ENCODE measurements at regions of chr9 and their contacts with region 1.

Region 1: GRCh38 chr9:137095664-137096517 is 9.1 kb downstream of the MAN1B1 start:
- DNase-seq: peak; percentile 73 to 95 (median 87)
- ATAC-seq: peak; percentile 97
- H3K4me3 ChIP-seq: peak overlapping the region; percentile 27 to 57
- H3K4me3 Mint-ChIP-seq: peak overlapping the region; percentile 80
- H3K27ac ChIP-seq: peak overlapping the region; percentile 73 to 84
- H3K27ac Mint-ChIP-seq: peak overlapping the region; percentile 96
- H3K4me1 ChIP-seq: peaks cover 22% of the 10 kb centered on the region
- H3K4me1 Mint-ChIP-seq: peaks cover 24% of the 10 kb centered on the region
- H3K27me3 ChIP-seq: no peaks in the 10 kb centered on the region
- H3K27me3 Mint-ChIP-seq: no peaks in the 10 kb centered on the region
- CTCF ChIP-seq: peak; percentile 68

Region 2: GRCh38 chr9:136700959-136701667 is 394.8 kb before region 1 on chr9:
- CTCF ChIA-PET with region 1: no interaction called
- POLR2A ChIA-PET with region 1: no interaction called
- intact Hi-C with region 1: no loop called
- DNase-seq: peak; percentile 32 to 87 (median 56)
- ATAC-seq: peak; percentile 87
- H3K4me3 ChIP-seq: peak overlapping the region; percentile 37 to 51
- H3K4me3 Mint-ChIP-seq: peak overlapping the region; percentile 79
- H3K27ac ChIP-seq: peak overlapping the region in 1 of 2 experiments; percentile 63
- H3K27ac Mint-ChIP-seq: peak overlapping the region; percentile 97
- H3K4me1 ChIP-seq: peaks cover 16% of the 10 kb centered on the region
- H3K4me1 Mint-ChIP-seq: peaks cover 20% of the 10 kb centered on the region
- H3K27me3 ChIP-seq: peaks cover 0 to 5% of the 10 kb centered on the region in 2 experiments
- H3K27me3 Mint-ChIP-seq: peaks cover 3% of the 10 kb centered on the region
- CTCF ChIP-seq: no peak

Region 3: GRCh38 chr9:137070201-137070905 is 25.5 kb before region 1 on chr9 and contains the start of gene SAPCD2:
- CTCF ChIA-PET with region 1: interaction called, 11 read pairs
- POLR2A ChIA-PET with region 1: interaction called, 3 read pairs
- intact Hi-C with region 1: loop called (anchors 1 to 2 kb)
- DNase-seq: peak; percentile 66 to 94 (median 82)
- ATAC-seq: peak; percentile 87
- H3K4me3 ChIP-seq: peak within 1 kb of the TSS; percentile 46 to 50
- H3K4me3 Mint-ChIP-seq: peak within 1 kb of the TSS; percentile 70
- H3K27ac ChIP-seq: peak within 1 kb of the TSS in 1 of 2 experiments; percentile 30
- H3K27ac Mint-ChIP-seq: no peak within 1 kb of the TSS
- H3K4me1 ChIP-seq: peaks cover 14% of the 10 kb centered on the region
- H3K4me1 Mint-ChIP-seq: peaks cover 14% of the 10 kb centered on the region
- H3K27me3 ChIP-seq: peaks cover 0 to 9% of the 10 kb centered on the region in 2 experiments
- H3K27me3 Mint-ChIP-seq: no peaks in the 10 kb centered on the region
- CTCF ChIP-seq: no peak
- total RNA-seq, gene SAPCD2: 0.38 to 0.47 TPM

Region 4: GRCh38 chr9:137114610-137115391 is 18.9 kb after region 1 on chr9 and contains the start of gene DPP7:
- CTCF ChIA-PET with region 1: interaction called, 11 read pairs
- POLR2A ChIA-PET with region 1: interaction called, 12 read pairs
- intact Hi-C with region 1: loop called (anchors 1 kb)
- DNase-seq: peak; percentile 50 to 90 (median 78)
- ATAC-seq: peak; percentile 90
- H3K4me3 ChIP-seq: peak within 1 kb of the TSS; percentile 43 to 58
- H3K4me3 Mint-ChIP-seq: peak within 1 kb of the TSS; percentile 69
- H3K27ac ChIP-seq: peak within 1 kb of the TSS in 1 of 2 experiments; percentile 30
- H3K27ac Mint-ChIP-seq: peak within 1 kb of the TSS; percentile 70
- H3K4me1 ChIP-seq: peaks cover 14% of the 10 kb centered on the region
- H3K4me1 Mint-ChIP-seq: peaks cover 7% of the 10 kb centered on the region
- H3K27me3 ChIP-seq: no peaks in the 10 kb centered on the region
- H3K27me3 Mint-ChIP-seq: no peaks in the 10 kb centered on the region
- CTCF ChIP-seq: no peak
- total RNA-seq, gene DPP7: 311 to 325 TPM

Region 5: GRCh38 chr9:137188490-137189296 is 92.8 kb after region 1 on chr9 and contains the starts of genes ANAPC2 and SSNA1:
- CTCF ChIA-PET with region 1: no interaction called
- POLR2A ChIA-PET with region 1: interaction called, 4 read pairs
- intact Hi-C with region 1: loop called in 1 of 2 experiments (anchors 5 kb)
- DNase-seq: peak; percentile 84 to 98 (median 94)
- ATAC-seq: peak; percentile 80
- H3K4me3 ChIP-seq: peak within 1 kb of the TSS; percentile 92 to 100
- H3K4me3 Mint-ChIP-seq: peak within 1 kb of the TSS; percentile 93
- H3K27ac ChIP-seq: peak within 1 kb of the TSS; percentile 95 to 96
- H3K27ac Mint-ChIP-seq: peak within 1 kb of the TSS; percentile 96
- H3K4me1 ChIP-seq: peaks cover 34% of the 10 kb centered on the region
- H3K4me1 Mint-ChIP-seq: peaks cover 41% of the 10 kb centered on the region
- H3K27me3 ChIP-seq: no peaks in the 10 kb centered on the region
- H3K27me3 Mint-ChIP-seq: no peaks in the 10 kb centered on the region
- CTCF ChIP-seq: peak; percentile 56
- total RNA-seq, gene ANAPC2: 166 to 171 TPM
- total RNA-seq, gene SSNA1: 28.8 to 29.6 TPM

Region 6: DNA sequence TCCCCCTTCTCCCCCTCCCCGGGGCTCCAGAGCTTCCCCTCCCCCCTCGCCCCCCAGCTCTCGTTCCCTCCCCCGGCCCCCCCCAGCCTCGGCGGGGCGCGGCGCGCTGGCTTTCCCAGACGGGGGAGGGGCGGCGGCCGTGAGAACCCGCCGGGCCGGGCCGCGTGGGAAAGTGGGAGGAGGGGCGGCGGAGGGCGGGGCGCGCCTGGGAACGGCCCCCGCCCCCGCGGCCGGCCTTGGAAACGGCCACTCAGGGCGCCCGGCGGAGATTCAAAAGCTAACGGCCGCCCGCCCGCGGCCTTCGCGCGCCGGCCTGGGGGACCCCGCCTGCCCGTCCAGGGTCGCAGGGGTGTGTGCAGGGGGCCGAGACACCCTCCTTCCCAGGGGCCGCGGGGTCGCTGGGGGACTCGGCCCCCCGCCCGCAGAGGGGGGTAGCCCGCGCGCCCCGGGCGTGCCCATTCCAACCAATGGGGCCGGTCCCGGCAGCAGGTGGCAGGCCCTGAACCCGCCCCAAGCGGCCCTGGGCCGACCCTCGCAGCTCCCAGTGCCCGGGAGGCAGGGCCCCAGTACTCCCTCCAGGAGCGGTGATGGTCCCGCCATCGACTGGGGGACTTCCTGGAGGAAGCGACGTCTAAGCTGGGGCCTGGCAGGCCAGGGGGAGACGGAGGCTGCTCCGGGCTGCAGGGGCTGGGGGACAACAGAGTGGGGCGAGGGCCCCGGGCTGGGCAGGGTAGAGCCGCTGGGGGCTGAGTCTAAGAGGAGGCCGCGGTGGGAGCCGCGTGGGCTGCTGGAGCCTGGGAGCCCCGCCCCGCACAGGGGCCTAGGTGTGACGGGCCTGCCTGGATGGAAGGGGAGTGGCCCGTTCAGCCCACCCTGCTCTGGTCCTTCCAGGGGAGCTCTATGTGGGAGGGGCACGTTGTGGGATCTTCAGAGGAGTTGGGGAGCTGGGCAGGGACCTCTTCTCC is 220.4 kb after region 1 on chr9:
- CTCF ChIA-PET with region 1: no interaction called
- POLR2A ChIA-PET with region 1: no interaction called
- intact Hi-C with region 1: no loop called
- DNase-seq: peak in 4 of 9 experiments; percentile 7 to 48 (median 18)
- ATAC-seq: peak; percentile 61
- H3K4me3 ChIP-seq: no peak overlapping the region
- H3K4me3 Mint-ChIP-seq: no peak overlapping the region
- H3K27ac ChIP-seq: no peak overlapping the region
- H3K27ac Mint-ChIP-seq: no peak overlapping the region
- H3K4me1 ChIP-seq: peaks cover 13% of the 10 kb centered on the region
- H3K4me1 Mint-ChIP-seq: peaks cover 4% of the 10 kb centered on the region
- H3K27me3 ChIP-seq: peaks cover 4 to 15% of the 10 kb centered on the region in 2 experiments
- H3K27me3 Mint-ChIP-seq: no peaks in the 10 kb centered on the region
- CTCF ChIP-seq: no peak

Measured in CD8-positive, alpha-beta T cell (primary cell).